GM12878 (cell line): ENCODE measurements at regions of chr17 and their contacts with region 1.

Region 1: GRCh38 chr17:68512247-68512982 is at the start of gene PRKAR1A:
- DNase-seq: peak; percentile 72
- ATAC-seq: peak; percentile 90
- H3K4me3 ChIP-seq: peak within 1 kb of the TSS; percentile 88
- H3K27ac ChIP-seq: peak within 1 kb of the TSS; percentile 98
- H3K4me1 ChIP-seq: peaks cover 7% of the 10 kb centered on the region; the same call in 1 of the 2 replicates
- H3K27me3 ChIP-seq: no peaks in the 10 kb centered on the region
- CTCF ChIP-seq: 0 out of 6 replicates have a peak, but pooled peaks of 1 of the 3 experiments have one; percentile 1
- EP300 ChIP-seq: peak; percentile 67; a peak in 2 of 4 replicates
- POLR2A ChIP-seq: peak; percentile 92
- RAD21 ChIP-seq: no peak
- polyA plus RNA-seq, gene PRKAR1A: 29.1 to 35.6 TPM

Region 2: GRCh38 chr17:68497885-68498319 is 14.5 kb before region 1 on chr17:
- CTCF ChIA-PET with region 1: interaction called, 29 read pairs
- POLR2A ChIA-PET with region 1: interaction called, 46 read pairs
- RAD21 ChIA-PET with region 1: interaction called, 19 read pairs
- SMC1A ChIA-PET with region 1: interaction called, 97 read pairs
- in situ Hi-C with region 1: no loop called
- intact Hi-C with region 1: loop called (anchors 1 kb)
- DNase-seq: peak; percentile 94
- ATAC-seq: peak; percentile 94
- H3K4me3 ChIP-seq: peak overlapping the region; percentile 18; the same call in 1 of the 2 replicates
- H3K27ac ChIP-seq: peak overlapping the region; percentile 82
- H3K4me1 ChIP-seq: peaks cover 26% of the 10 kb centered on the region
- H3K27me3 ChIP-seq: no peaks in the 10 kb centered on the region
- CTCF ChIP-seq: no peak
- EP300 ChIP-seq: peak; percentile 66 to 98
- POLR2A ChIP-seq: no peak
- RAD21 ChIP-seq: no peak